SK-N-SH (cell line): ENCODE measurements at regions of chr11 and their contacts with region 1.

Region 1: DNA sequence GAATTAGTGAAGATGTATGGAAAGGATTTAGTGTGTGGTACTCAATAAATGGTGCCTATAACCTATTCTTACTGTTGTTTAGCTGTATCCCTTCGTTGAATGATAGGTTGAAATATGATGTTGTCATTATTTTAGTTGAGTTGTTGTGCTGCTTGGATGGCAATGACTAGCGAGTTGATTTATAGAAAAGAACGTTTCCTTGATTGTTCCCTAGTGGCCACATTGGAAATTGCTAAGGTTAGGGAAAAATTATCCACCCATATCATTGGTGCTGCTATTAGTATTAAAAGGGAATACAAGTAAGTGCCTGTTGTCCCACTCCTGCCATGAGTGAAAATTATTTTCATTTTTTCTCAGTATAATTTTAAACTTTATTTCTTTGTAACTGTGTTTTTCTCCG is 14.5 kb downstream of the EMSY start:
- DNase-seq: peak; percentile 38
- H3K4me3 ChIP-seq: no peak overlapping the region
- H3K27ac ChIP-seq: no peak overlapping the region
- H3K4me1 ChIP-seq: peaks cover 0 to 9% of the 10 kb centered on the region in 2 experiments; a peak in 2 of 4 replicates
- H3K27me3 ChIP-seq: no peaks in the 10 kb centered on the region
- CTCF ChIP-seq: peak; percentile 60
- EP300 ChIP-seq: no peak
- RAD21 ChIP-seq: peak; percentile 18; the same call in 1 of the 2 replicates

Region 2: GRCh38 chr11:76444384-76445123 is 14.7 kb before region 1 on chr11 and contains the start of gene EMSY:
- CTCF ChIA-PET with region 1: interaction called, 14 read pairs
- POLR2A ChIA-PET with region 1: no interaction called
- DNase-seq: peak; percentile 88
- H3K4me3 ChIP-seq: peak within 1 kb of the TSS; percentile 90 to 99
- H3K27ac ChIP-seq: peak within 1 kb of the TSS; percentile 88 to 91
- H3K4me1 ChIP-seq: peaks cover 5 to 8% of the 10 kb centered on the region in 2 experiments; a peak in 3 of 4 replicates
- H3K27me3 ChIP-seq: no peaks in the 10 kb centered on the region
- CTCF ChIP-seq: no peak
- EP300 ChIP-seq: no peak
- RAD21 ChIP-seq: no peak
- polyA plus RNA-seq, gene EMSY: 11.1 and 12.6 TPM in 2 replicates